HepG2 (cell line): ENCODE measurements at regions of chr7 and their contacts with region 1.

Region 1: GRCh38 chr7:75617634-75618234 is 121.0 kb downstream of the HIP1 start:
- DNase-seq: peak; percentile 50
- ATAC-seq: peak; percentile 71
- H3K4me3 ChIP-seq: peak overlapping the region in 1 of 3 experiments; percentile 9; a peak in 1 of 6 replicates
- H3K27ac ChIP-seq: no peak overlapping the region
- H3K4me1 ChIP-seq: peaks cover 19% of the 10 kb centered on the region
- H3K27me3 ChIP-seq: no peaks in the 10 kb centered on the region
- CTCF ChIP-seq: no peak
- EP300 ChIP-seq: no peak
- POLR2A ChIP-seq: no peak
- RAD21 ChIP-seq: no peak

Region 2: DNA sequence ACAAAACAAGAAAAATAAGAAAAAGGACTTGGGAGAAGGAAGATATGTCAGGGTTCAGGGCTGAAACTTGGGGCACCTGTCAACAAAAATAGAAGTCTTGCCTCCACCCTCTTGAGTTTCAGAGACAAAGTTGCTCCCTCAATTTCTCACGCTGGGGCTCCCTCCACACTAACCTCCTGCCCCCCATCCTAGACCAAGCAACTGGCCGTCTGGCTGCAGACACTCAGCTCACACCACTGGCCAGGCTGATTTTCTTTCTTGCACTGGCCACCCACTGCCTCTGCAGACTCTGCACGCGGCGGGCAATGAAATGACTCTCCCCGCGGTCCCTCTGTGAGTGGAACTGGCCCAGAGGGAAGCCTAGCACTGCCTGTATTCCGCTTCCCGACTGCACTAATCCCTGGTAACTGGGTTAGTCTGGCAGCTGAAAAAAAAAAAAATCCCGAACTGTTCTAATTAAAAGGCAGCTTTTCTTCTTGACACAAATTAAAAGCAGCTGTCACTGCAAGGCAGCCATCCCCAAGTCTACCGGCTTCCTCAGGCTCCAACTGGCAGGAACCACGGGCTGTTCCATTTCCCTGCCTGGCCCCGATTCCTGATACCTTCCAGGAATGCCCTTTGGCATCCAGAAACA is 42.1 kb before region 1 on chr7:
- CTCF ChIA-PET with region 1: no interaction called
- POLR2A ChIA-PET with region 1: no interaction called
- in situ Hi-C with region 1: no loop called
- intact Hi-C with region 1: no loop called
- DNase-seq: no peak
- ATAC-seq: no peak
- H3K4me3 ChIP-seq: no peak overlapping the region
- H3K27ac ChIP-seq: no peak overlapping the region
- H3K4me1 ChIP-seq: no peaks in the 10 kb centered on the region
- H3K27me3 ChIP-seq: no peaks in the 10 kb centered on the region
- CTCF ChIP-seq: no peak
- EP300 ChIP-seq: no peak
- POLR2A ChIP-seq: no peak
- RAD21 ChIP-seq: no peak

Region 3: GRCh38 chr7:75762314-75762917 is 144.7 kb after region 1 on chr7:
- CTCF ChIA-PET with region 1: interaction called, 8 read pairs
- POLR2A ChIA-PET with region 1: no interaction called
- in situ Hi-C with region 1: no loop called
- intact Hi-C with region 1: loop called (anchors 5 kb)
- DNase-seq: peak; percentile 59
- ATAC-seq: peak; percentile 94
- H3K4me3 ChIP-seq: no peak overlapping the region
- H3K27ac ChIP-seq: no peak overlapping the region
- H3K4me1 ChIP-seq: no peaks in the 10 kb centered on the region
- H3K27me3 ChIP-seq: no peaks in the 10 kb centered on the region
- CTCF ChIP-seq: peak; percentile 79
- EP300 ChIP-seq: no peak
- POLR2A ChIP-seq: no peak
- RAD21 ChIP-seq: peak; percentile 82